ENCODE measurements at regions of chr10 and their contacts with region 1.

Region 1: DNA sequence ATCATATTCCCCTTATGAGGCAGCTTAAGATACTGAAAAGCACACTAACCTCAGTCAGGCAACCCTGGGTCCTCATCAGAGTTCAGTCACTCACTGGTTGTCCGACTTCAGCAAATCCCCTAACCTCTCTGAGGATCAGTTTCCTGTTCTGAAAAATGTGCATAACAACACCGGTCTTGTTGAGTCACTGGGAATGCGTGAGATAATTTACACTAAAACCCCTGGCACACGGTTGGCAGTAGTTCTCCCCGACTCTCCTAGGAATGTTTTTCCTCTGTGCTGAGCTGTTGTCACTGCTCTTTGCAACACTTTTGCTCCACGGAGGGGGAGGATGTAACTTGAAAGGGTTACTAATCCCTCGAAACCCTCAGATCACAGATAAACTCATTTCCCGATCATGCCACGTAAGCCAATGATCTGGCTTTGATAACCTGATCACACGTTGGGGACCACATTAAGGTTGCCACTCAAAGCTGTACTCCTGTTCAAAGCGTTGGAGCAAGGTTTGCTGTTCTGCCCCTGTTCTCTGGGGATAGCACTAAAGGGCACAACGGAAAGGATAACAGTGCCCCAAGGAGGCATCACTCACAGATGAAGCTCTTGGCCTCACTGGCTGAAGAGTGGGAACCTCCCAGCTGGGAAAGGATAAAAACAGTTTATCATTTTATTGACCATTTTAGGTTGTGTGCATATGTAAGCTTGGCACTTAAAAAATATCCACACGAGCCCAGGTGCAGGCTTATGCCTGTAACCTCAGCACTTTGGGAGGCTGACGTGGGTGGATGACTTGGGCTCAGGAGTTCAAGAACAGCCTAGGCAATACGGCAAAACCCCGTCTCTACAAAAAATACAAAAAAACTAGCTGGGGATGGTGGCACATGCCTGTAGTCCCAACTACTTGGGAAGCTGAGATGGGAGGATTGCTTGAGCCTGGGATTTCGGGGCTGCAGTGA is 5.0 kb upstream of the RBM17 start:
- DNase-seq: peak; percentile 74
- ATAC-seq: peak; percentile 67
- H3K4me3 Mint-ChIP-seq: peak overlapping the region; percentile 64
- H3K27ac Mint-ChIP-seq: peak overlapping the region; percentile 86
- H3K4me1 Mint-ChIP-seq: peaks cover 78% of the 10 kb centered on the region
- H3K27me3 Mint-ChIP-seq: no peaks in the 10 kb centered on the region

Region 2: GRCh38 chr10:6062101-6062771 is 21.6 kb before region 1 on chr10 and contains the start of gene IL2RA:
- CTCF ChIA-PET with region 1: interaction called, 370 read pairs
- POLR2A ChIA-PET with region 1: interaction called, 158 read pairs
- DNase-seq: peak; percentile 73
- ATAC-seq: peak; percentile 74
- H3K4me3 Mint-ChIP-seq: peak within 1 kb of the TSS; percentile 91
- H3K27ac Mint-ChIP-seq: peak within 1 kb of the TSS; percentile 92
- H3K4me1 Mint-ChIP-seq: peaks cover 72% of the 10 kb centered on the region
- H3K27me3 Mint-ChIP-seq: no peaks in the 10 kb centered on the region
- total RNA-seq, gene IL2RA: 174 to 177 TPM

Region 3: GRCh38 chr10:6068422-6068821 is 15.4 kb before region 1 on chr10:
- CTCF ChIA-PET with region 1: interaction called, 370 read pairs
- POLR2A ChIA-PET with region 1: interaction called, 158 read pairs
- DNase-seq: peak; percentile 81
- ATAC-seq: peak; percentile 77
- H3K4me3 Mint-ChIP-seq: peak overlapping the region; percentile 74
- H3K27ac Mint-ChIP-seq: peak overlapping the region; percentile 95
- H3K4me1 Mint-ChIP-seq: peaks cover 94% of the 10 kb centered on the region
- H3K27me3 Mint-ChIP-seq: no peaks in the 10 kb centered on the region